ENCODE measurements at regions of chr13 and their contacts with region 1.

Region 1: GRCh38 chr13:35789335-35790165 is 313.1 kb upstream of the MAB21L1 start:
- DNase-seq: no peak
- H3K4me3 ChIP-seq: no peak overlapping the region
- H3K27ac ChIP-seq: no peak overlapping the region
- H3K4me1 ChIP-seq: peaks cover 13% of the 10 kb centered on the region
- H3K27me3 ChIP-seq: no peaks in the 10 kb centered on the region
- CTCF ChIP-seq: peak; percentile 77

Region 2: GRCh38 chr13:35210261-35210660 is 579.3 kb before region 1 on chr13:
- CTCF ChIA-PET with region 1: no interaction called
- POLR2A ChIA-PET with region 1: no interaction called
- intact Hi-C with region 1: loop called (anchors 1 kb)
- DNase-seq: no peak
- H3K4me3 ChIP-seq: no peak overlapping the region
- H3K27ac ChIP-seq: no peak overlapping the region
- H3K4me1 ChIP-seq: no peaks in the 10 kb centered on the region
- H3K27me3 ChIP-seq: no peaks in the 10 kb centered on the region
- CTCF ChIP-seq: peak; percentile 24; the same call in 1 of the 2 replicates

Region 3: DNA sequence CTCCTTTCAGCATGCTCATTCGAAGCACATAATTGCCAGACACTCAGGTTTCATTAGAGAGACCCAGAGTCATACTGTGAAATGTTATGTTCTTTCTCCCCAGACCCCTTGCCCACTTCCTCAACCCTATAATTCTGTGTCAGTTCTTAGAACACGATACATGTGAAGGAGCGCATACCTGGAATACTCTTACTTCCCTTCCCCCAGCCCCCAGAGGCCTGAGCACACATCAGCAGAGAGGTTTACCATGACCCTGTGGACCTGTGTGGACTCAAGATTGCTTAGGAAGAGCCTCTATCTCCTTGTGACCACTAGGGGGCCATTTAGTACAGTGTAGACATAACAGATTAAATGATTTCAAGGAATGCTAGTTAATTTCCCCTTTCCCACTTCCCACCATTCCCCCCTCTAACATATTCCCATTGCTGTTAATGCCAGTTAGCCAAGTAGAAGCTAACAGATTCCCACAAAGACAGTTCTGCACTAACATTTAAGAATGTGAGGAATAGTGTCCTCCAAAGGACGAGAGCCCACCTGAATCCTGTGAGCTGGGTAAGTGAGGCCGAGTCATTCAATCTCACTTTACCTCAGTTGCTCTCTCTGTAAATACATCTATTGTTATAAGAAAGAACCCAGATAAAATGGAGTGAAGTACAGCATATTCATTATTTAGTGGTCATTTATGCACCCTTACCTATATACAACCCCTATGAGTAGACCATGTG is 158.8 kb before region 1 on chr13:
- CTCF ChIA-PET with region 1: no interaction called
- POLR2A ChIA-PET with region 1: no interaction called
- intact Hi-C with region 1: loop called (anchors 1 kb)
- DNase-seq: peak in 1 of 2 experiments; percentile 55
- H3K4me3 ChIP-seq: no peak overlapping the region
- H3K27ac ChIP-seq: no peak overlapping the region
- H3K4me1 ChIP-seq: no peaks in the 10 kb centered on the region
- H3K27me3 ChIP-seq: no peaks in the 10 kb centered on the region
- CTCF ChIP-seq: peak; percentile 85

Region 4: DNA sequence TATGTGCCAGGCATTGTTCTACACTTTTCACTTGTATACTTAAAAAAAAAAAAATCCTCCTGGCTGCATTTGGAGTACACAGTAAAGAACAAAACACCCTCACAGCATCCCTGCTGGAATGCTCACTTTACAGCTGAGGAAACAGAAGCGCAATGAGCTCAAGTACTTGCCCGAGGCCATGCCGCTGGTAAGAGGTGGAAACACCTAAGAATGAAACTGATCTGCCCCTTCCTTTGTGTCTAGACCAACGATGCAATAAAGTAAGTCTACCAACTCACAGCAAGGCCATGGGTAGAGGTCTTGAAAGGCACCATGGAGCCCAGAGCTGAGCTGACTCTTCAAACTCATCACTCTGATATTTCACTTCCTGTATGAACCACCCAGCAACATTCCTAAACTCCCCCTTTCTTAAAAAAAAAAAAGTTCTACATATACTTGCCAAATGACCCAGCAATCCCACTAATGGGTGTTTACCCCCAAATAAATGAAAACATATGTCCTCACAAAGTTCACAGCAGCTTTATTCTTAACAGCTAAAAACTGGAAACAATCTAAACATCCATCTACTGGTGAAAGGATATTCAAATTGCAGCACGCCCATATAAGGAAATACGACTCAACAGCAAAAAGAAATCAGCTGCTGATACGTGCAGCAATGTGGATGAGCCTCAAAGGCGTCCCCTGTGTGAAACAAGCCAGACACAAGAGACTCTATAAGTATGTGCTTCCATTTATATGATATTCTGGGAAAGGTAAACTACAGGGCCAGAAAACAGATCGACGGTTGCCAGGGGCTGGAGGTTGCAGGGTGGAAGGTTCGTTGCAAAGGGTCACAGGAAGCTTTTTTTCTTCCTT is 76.4 kb before region 1 on chr13:
- CTCF ChIA-PET with region 1: no interaction called
- POLR2A ChIA-PET with region 1: no interaction called
- intact Hi-C with region 1: no loop called
- DNase-seq: peak in 1 of 2 experiments; percentile 37
- H3K4me3 ChIP-seq: no peak overlapping the region
- H3K27ac ChIP-seq: no peak overlapping the region
- H3K4me1 ChIP-seq: peaks cover 46% of the 10 kb centered on the region
- H3K27me3 ChIP-seq: no peaks in the 10 kb centered on the region
- CTCF ChIP-seq: no peak